ENCODE measurements at regions of chr6 and their contacts with region 1.

Region 1: GRCh38 chr6:26342106-26343004 is 22.6 kb upstream of the BTN3A2 start:
- DNase-seq: no peak
- H3K4me3 ChIP-seq: no peak overlapping the region
- H3K27ac ChIP-seq: no peak overlapping the region
- H3K4me1 ChIP-seq: peaks cover 2% of the 10 kb centered on the region
- H3K27me3 ChIP-seq: peaks cover 0 to 3% of the 10 kb centered on the region in 2 experiments
- CTCF ChIP-seq: no peak
- POLR2A ChIP-seq: no peak

Region 2: GRCh38 chr6:26329763-26330511 is 12.4 kb before region 1 on chr6:
- CTCF ChIA-PET with region 1: interaction called, 28 read pairs
- POLR2A ChIA-PET with region 1: no interaction called
- dilution Hi-C with region 1: no loop called
- intact Hi-C with region 1: no loop called
- DNase-seq: peak; percentile 52
- H3K4me3 ChIP-seq: peak overlapping the region in 2 of 3 experiments; percentile 92 to 95
- H3K27ac ChIP-seq: no peak overlapping the region
- H3K4me1 ChIP-seq: peaks cover 23% of the 10 kb centered on the region
- H3K27me3 ChIP-seq: peaks cover 0 to 7% of the 10 kb centered on the region in 2 experiments
- CTCF ChIP-seq: no peak
- POLR2A ChIP-seq: no peak

Region 3: GRCh38 chr6:26457806-26458688 is 115.7 kb after region 1 on chr6 and contains the start of gene BTN2A1:
- CTCF ChIA-PET with region 1: interaction called, 10 read pairs
- POLR2A ChIA-PET with region 1: no interaction called
- dilution Hi-C with region 1: no loop called
- intact Hi-C with region 1: loop called (anchors 5 kb)
- DNase-seq: peak; percentile 97
- H3K4me3 ChIP-seq: peak within 1 kb of the TSS; percentile 92 to 99 (median 99)
- H3K27ac ChIP-seq: peak within 1 kb of the TSS; percentile 92
- H3K4me1 ChIP-seq: peaks cover 20% of the 10 kb centered on the region
- H3K27me3 ChIP-seq: no peaks in the 10 kb centered on the region
- CTCF ChIP-seq: no peak
- POLR2A ChIP-seq: peak; percentile 18
- total RNA-seq, gene BTN2A1: 23.4 and 25.1 TPM in 2 replicates

Region 4: GRCh38 chr6:26520853-26521599 is 178.7 kb after region 1 on chr6:
- CTCF ChIA-PET with region 1: interaction called, 10 read pairs
- POLR2A ChIA-PET with region 1: no interaction called
- dilution Hi-C with region 1: loop called (anchors 25 kb)
- intact Hi-C with region 1: no loop called
- DNase-seq: peak; percentile 88
- H3K4me3 ChIP-seq: peak overlapping the region; percentile 46 to 82 (median 79)
- H3K27ac ChIP-seq: peak overlapping the region; percentile 76
- H3K4me1 ChIP-seq: peaks cover 10% of the 10 kb centered on the region
- H3K27me3 ChIP-seq: no peaks in the 10 kb centered on the region
- CTCF ChIP-seq: no peak
- POLR2A ChIP-seq: peak; percentile 68

Region 5: GRCh38 chr6:26553635-26554446 is 211.5 kb after region 1 on chr6:
- CTCF ChIA-PET with region 1: interaction called, 31 read pairs
- POLR2A ChIA-PET with region 1: no interaction called
- dilution Hi-C with region 1: loop called (anchors 25 kb)
- intact Hi-C with region 1: no loop called
- DNase-seq: peak; percentile 93
- H3K4me3 ChIP-seq: peak overlapping the region; percentile 29 to 94 (median 70)
- H3K27ac ChIP-seq: peak overlapping the region; percentile 71
- H3K4me1 ChIP-seq: peaks cover 13% of the 10 kb centered on the region
- H3K27me3 ChIP-seq: no peaks in the 10 kb centered on the region
- CTCF ChIP-seq: no peak
- POLR2A ChIP-seq: no peak

Region 6: GRCh38 chr6:27078734-27079357 is 736.5 kb after region 1 on chr6:
- CTCF ChIA-PET with region 1: interaction called, 6 read pairs
- POLR2A ChIA-PET with region 1: no interaction called
- dilution Hi-C with region 1: no loop called
- intact Hi-C with region 1: loop called (anchors 5 kb)
- DNase-seq: peak; percentile 71
- H3K4me3 ChIP-seq: no peak overlapping the region
- H3K27ac ChIP-seq: no peak overlapping the region
- H3K4me1 ChIP-seq: peaks cover 2% of the 10 kb centered on the region
- H3K27me3 ChIP-seq: peaks cover 6 to 16% of the 10 kb centered on the region in 2 experiments
- CTCF ChIP-seq: peak; percentile 48 to 49
- POLR2A ChIP-seq: no peak

Measured in endothelial cell of umbilical vein (primary cell).